ENCODE measurements at regions of chr16 and their contacts with region 1.

Region 1: DNA sequence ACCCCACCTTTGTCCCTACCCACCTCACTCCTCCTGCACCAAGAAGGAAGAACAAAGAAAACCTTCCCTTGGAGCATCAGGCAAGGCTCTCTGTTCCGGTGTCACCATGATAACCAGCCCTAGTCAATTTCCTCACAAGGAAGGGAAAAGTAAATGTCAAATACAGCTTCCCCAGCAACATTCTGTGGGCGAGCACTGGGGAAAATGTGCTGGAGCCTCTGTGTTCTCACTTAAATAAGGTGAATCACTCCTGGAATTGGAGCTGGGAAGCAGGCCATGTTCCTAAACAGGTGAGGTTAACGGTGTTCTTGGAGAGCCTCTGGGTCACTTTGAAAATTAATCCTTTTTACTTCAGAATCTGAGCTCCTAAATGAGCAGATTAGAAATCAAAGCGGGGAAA is 427.9 kb upstream of the ERCC4 start:
- DNase-seq: no peak
- ATAC-seq: no peak
- H3K4me3 ChIP-seq: no peak overlapping the region
- H3K27ac ChIP-seq: no peak overlapping the region
- H3K4me1 ChIP-seq: no peaks in the 10 kb centered on the region
- H3K27me3 ChIP-seq: peaks cover 0 to 8% (median 0%) of the 10 kb centered on the region in 9 donors
- CTCF ChIP-seq: no peak
- POLR2A ChIP-seq: no peak

Region 2: DNA sequence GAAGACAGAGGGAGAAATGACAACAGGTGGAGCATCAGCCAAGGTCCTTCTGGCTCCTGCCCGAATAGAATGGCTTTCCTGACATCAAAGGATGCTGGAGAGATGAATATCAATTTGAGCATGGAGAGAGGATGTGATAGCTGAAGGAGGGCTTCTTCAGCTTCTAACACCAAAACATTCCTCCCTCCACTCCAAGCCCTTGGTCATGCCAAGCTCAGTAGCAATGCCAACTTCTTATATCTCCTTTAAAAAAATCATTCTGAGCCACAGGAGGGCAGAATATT is 140.2 kb before region 1 on chr16:
- intact Hi-C with region 1: no loop called
- DNase-seq: no peak
- ATAC-seq: no peak
- H3K4me3 ChIP-seq: no peak overlapping the region
- H3K27ac ChIP-seq: no peak overlapping the region
- H3K4me1 ChIP-seq: no peaks in the 10 kb centered on the region
- H3K27me3 ChIP-seq: peaks cover 0 to 9% (median 0%) of the 10 kb centered on the region in 9 donors
- CTCF ChIP-seq: no peak
- POLR2A ChIP-seq: no peak

Region 3: GRCh38 chr16:13552062-13552959 is 60.3 kb after region 1 on chr16:
- intact Hi-C with region 1: loop called in 1 of 10 experiments (anchors 10 kb)
- DNase-seq: no peak
- ATAC-seq: no peak
- H3K4me3 ChIP-seq: no peak overlapping the region
- H3K27ac ChIP-seq: no peak overlapping the region
- H3K4me1 ChIP-seq: no peaks in the 10 kb centered on the region
- H3K27me3 ChIP-seq: peaks cover 0 to 22% (median 0%) of the 10 kb centered on the region in 9 donors
- CTCF ChIP-seq: no peak
- POLR2A ChIP-seq: no peak

Measured in heart left ventricle (tissue), 16 donors.